ENCODE measurements at regions of chr11 and their contacts with region 1.

Region 1: GRCh38 chr11:85941380-85941973 is 86.3 kb downstream of the CCDC83 start:
- DNase-seq: peak; percentile 69
- H3K4me3 Mint-ChIP-seq: no peak overlapping the region
- H3K27ac Mint-ChIP-seq: no peak overlapping the region
- H3K4me1 Mint-ChIP-seq: peaks cover 24% of the 10 kb centered on the region
- H3K27me3 Mint-ChIP-seq: no peaks in the 10 kb centered on the region

Region 2: GRCh38 chr11:85595285-85595884 is 346.1 kb before region 1 on chr11:
- CTCF ChIA-PET with region 1: no interaction called
- POLR2A ChIA-PET with region 1: no interaction called
- intact Hi-C with region 1: loop called (anchors 10 kb)
- DNase-seq: no peak
- H3K4me3 Mint-ChIP-seq: no peak overlapping the region
- H3K27ac Mint-ChIP-seq: no peak overlapping the region
- H3K4me1 Mint-ChIP-seq: no peaks in the 10 kb centered on the region
- H3K27me3 Mint-ChIP-seq: no peaks in the 10 kb centered on the region

Region 3: DNA sequence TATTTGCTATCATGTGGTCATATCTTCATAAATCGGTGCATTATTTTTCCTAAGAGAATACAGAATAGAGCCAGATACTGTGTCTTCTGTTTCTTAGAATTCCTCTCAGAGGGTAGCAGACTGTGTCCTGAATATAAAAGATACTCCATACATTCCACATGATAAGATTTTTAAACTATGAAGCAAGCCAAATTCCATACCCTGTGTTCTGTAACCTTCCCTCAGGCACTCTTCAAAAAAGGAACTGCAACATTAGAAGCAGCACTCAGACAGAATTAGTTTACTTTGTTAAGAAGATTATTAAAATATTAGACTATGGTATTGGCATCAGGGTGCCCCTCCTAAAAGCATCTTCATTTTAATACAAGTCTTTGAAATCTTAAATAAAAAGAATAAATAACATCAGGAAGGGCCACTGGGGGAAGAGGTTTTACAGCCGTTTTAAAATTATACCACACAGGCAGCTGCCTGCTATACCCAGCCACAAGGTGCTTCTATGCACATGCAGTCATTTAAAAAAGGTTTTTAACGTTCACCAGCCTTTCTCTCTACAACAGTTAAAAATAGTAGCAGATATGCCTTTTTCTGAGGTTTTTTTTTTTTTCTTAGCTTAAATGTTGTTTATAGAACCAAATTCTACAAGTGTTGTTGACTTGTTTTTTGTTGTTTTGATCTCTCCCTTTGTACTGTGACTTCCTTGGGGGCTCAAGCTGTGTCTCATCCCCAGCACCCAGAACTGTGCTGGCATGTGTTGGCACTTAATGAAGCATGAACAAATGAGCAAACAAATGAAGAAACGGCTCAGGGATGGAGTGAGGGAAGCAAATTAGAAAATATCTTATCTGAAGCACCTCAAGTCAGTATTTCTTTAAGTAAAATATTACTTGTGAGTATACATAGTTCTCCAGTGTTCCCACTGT is 200.7 kb before region 1 on chr11:
- CTCF ChIA-PET with region 1: no interaction called
- POLR2A ChIA-PET with region 1: no interaction called
- intact Hi-C with region 1: no loop called
- DNase-seq: no peak
- H3K4me3 Mint-ChIP-seq: no peak overlapping the region
- H3K27ac Mint-ChIP-seq: no peak overlapping the region
- H3K4me1 Mint-ChIP-seq: peaks cover 31% of the 10 kb centered on the region
- H3K27me3 Mint-ChIP-seq: no peaks in the 10 kb centered on the region